HCT116 (cell line): ENCODE measurements at regions of chr11 and their contacts with region 1.

Region 1: GRCh38 chr11:123707606-123708205 is 33.8 kb downstream of the ZNF202 start:
- DNase-seq: peak; percentile 57
- ATAC-seq: peak; percentile 84
- H3K4me3 ChIP-seq: no peak overlapping the region
- H3K27ac ChIP-seq: no peak overlapping the region
- H3K4me1 ChIP-seq: no peaks in the 10 kb centered on the region
- H3K27me3 ChIP-seq: peaks cover 6% of the 10 kb centered on the region; the same call in 1 of the 2 replicates
- CTCF ChIP-seq: peak; percentile 77 to 92 (median 79)
- POLR2A ChIP-seq: no peak
- RAD21 ChIP-seq: peak; percentile 90

Region 2: DNA sequence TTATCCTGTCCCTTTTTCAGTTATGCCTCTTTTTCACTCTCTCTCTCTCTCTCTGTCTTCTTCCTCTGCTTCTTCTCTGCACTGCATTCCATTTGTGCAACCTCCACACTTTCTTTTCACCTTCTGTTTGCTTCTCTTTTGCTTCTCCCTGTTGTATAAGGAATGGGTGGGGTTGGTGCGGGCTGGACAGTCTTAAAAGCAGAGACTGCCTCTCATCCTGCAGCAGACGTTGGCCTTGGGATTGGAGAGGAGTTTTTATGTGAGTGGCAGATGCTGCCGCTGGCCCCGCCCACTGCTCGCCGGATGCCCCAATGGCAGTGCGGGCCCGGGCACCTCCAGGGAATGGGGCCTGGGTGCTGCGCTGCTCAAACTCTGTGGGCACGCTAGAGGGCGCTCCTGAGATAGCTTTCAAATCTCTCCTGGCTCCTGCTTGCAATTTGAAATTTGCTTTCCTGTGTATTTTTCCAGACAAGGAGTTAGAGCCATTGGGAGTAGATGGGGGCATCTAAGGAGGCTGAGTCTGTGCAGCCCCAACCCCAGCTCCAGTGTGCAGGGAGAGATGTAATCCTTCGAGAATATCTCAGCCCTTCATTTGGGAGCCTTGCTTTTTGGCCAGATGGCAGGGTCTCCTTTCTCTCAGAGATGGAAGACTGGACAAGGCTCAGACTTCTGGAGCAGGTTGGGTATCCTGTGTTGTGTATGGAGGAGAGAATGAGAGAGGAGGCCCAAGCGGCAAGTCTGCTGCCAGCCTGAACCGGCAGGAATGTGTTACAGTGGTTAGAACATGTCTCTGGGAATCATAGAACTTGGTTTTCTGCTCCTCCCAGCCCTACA is 196.5 kb before region 1 on chr11:
- CTCF ChIA-PET with region 1: no interaction called
- POLR2A ChIA-PET with region 1: no interaction called
- RAD21 ChIA-PET with region 1: no interaction called
- intact Hi-C with region 1: loop called (anchors 10 kb)
- DNase-seq: peak; percentile 74
- ATAC-seq: peak; percentile 100
- H3K4me3 ChIP-seq: no peak overlapping the region
- H3K27ac ChIP-seq: no peak overlapping the region
- H3K4me1 ChIP-seq: peaks cover 5 to 6% of the 10 kb centered on the region in 2 experiments; a peak in 3 of 4 replicates
- H3K27me3 ChIP-seq: no peaks in the 10 kb centered on the region; the same call in 1 of the 2 replicates
- CTCF ChIP-seq: peak; percentile 82 to 95 (median 89)
- POLR2A ChIP-seq: no peak
- RAD21 ChIP-seq: peak; percentile 88

Region 3: GRCh38 chr11:123580557-123581275 is 127.0 kb before region 1 on chr11:
- CTCF ChIA-PET with region 1: interaction called, 33 read pairs
- POLR2A ChIA-PET with region 1: no interaction called
- RAD21 ChIA-PET with region 1: interaction called in 1 of 2 experiments, 7 read pairs
- intact Hi-C with region 1: loop called (anchors 1 kb)
- DNase-seq: peak; percentile 41
- ATAC-seq: peak; percentile 91
- H3K4me3 ChIP-seq: no peak overlapping the region
- H3K27ac ChIP-seq: no peak overlapping the region
- H3K4me1 ChIP-seq: peaks cover 2 to 11% of the 10 kb centered on the region in 2 experiments; a peak in 3 of 4 replicates
- H3K27me3 ChIP-seq: peaks cover 12% of the 10 kb centered on the region
- CTCF ChIP-seq: peak; percentile 91 to 98 (median 97)
- POLR2A ChIP-seq: no peak
- RAD21 ChIP-seq: peak; percentile 86

Region 4: DNA sequence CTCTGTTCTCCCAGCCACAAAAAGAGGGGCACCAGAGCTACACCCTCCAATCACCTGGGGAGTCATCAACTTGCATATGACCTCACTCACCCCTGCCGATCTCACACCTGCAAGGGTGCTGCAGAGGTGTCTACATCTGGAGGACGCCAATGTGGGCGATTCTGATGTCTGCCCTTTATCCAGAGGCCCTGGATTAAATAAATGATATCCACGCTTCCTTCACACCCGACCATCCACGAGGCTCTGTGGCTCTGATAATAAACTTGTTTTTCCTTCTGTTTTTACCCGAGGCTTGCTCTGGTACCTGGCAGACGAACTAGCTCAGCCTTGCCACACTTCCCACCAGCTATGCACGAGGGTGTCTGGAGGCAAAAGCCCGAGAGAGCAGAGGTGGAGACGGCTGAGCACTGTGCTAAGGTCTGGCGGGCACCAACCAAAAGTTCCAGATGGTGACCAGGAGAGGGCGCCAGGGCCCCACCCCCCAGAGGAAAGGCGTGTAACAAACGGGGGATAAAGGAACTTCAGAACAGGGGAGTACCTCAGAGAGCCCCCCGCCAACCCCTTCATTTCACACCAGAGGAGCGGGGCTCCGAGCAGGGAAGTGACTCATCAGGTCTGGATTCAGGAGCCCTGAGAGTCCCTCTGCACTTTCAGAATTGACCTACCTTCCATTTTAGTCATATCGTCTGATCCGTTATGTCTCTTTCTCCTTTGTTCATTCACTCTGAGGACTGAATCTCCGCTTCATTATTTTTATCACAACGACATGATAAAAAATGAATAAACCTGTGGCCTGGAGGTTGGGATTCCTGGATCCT is 66.8 kb before region 1 on chr11:
- CTCF ChIA-PET with region 1: interaction called, 104 read pairs
- POLR2A ChIA-PET with region 1: interaction called, 9 read pairs
- RAD21 ChIA-PET with region 1: interaction called, 6 read pairs
- intact Hi-C with region 1: loop called (anchors 1 kb)
- DNase-seq: no peak
- ATAC-seq: peak; percentile 98
- H3K4me3 ChIP-seq: no peak overlapping the region
- H3K27ac ChIP-seq: no peak overlapping the region
- H3K4me1 ChIP-seq: peaks cover 0 to 5% of the 10 kb centered on the region in 2 experiments; a peak in 1 of 4 replicates
- H3K27me3 ChIP-seq: peaks cover 25% of the 10 kb centered on the region
- CTCF ChIP-seq: peak; percentile 79 to 92 (median 89); a peak in 5 of 6 replicates
- POLR2A ChIP-seq: no peak
- RAD21 ChIP-seq: peak; percentile 89

Region 5: GRCh38 chr11:123654566-123655081 is 53.1 kb before region 1 on chr11 and contains the start of gene SCN3B:
- CTCF ChIA-PET with region 1: interaction called, 10 read pairs
- POLR2A ChIA-PET with region 1: no interaction called
- RAD21 ChIA-PET with region 1: no interaction called
- intact Hi-C with region 1: no loop called
- DNase-seq: no peak
- ATAC-seq: peak; percentile 94
- H3K4me3 ChIP-seq: peak within 1 kb of the TSS; percentile 28 to 52
- H3K27ac ChIP-seq: no peak within 1 kb of the TSS
- H3K4me1 ChIP-seq: peaks cover 0 to 4% of the 10 kb centered on the region in 2 experiments; a peak in 1 of 4 replicates
- H3K27me3 ChIP-seq: peaks cover 22% of the 10 kb centered on the region
- CTCF ChIP-seq: no peak
- POLR2A ChIP-seq: no peak
- RAD21 ChIP-seq: no peak
- total RNA-seq, gene SCN3B: 0.05 TPM

Region 6: GRCh38 chr11:123719452-123719851 is 11.7 kb after region 1 on chr11:
- CTCF ChIA-PET with region 1: interaction called, 18 read pairs
- POLR2A ChIA-PET with region 1: no interaction called
- RAD21 ChIA-PET with region 1: no interaction called
- intact Hi-C with region 1: no loop called
- DNase-seq: no peak
- ATAC-seq: no peak
- H3K4me3 ChIP-seq: no peak overlapping the region
- H3K27ac ChIP-seq: no peak overlapping the region
- H3K4me1 ChIP-seq: no peaks in the 10 kb centered on the region
- H3K27me3 ChIP-seq: peaks cover 24% of the 10 kb centered on the region
- CTCF ChIP-seq: no peak
- POLR2A ChIP-seq: no peak
- RAD21 ChIP-seq: no peak

Region 7: GRCh38 chr11:123760894-123761293 is 53.2 kb after region 1 on chr11:
- CTCF ChIA-PET with region 1: no interaction called
- POLR2A ChIA-PET with region 1: no interaction called
- RAD21 ChIA-PET with region 1: no interaction called
- intact Hi-C with region 1: no loop called
- DNase-seq: no peak
- ATAC-seq: no peak
- H3K4me3 ChIP-seq: no peak overlapping the region
- H3K27ac ChIP-seq: no peak overlapping the region
- H3K4me1 ChIP-seq: no peaks in the 10 kb centered on the region
- H3K27me3 ChIP-seq: peaks cover 35% of the 10 kb centered on the region
- CTCF ChIP-seq: no peak
- POLR2A ChIP-seq: no peak
- RAD21 ChIP-seq: no peak